PC-3 (cell line): ENCODE measurements at regions of chr11 and their contacts with region 1.

Region 1: DNA sequence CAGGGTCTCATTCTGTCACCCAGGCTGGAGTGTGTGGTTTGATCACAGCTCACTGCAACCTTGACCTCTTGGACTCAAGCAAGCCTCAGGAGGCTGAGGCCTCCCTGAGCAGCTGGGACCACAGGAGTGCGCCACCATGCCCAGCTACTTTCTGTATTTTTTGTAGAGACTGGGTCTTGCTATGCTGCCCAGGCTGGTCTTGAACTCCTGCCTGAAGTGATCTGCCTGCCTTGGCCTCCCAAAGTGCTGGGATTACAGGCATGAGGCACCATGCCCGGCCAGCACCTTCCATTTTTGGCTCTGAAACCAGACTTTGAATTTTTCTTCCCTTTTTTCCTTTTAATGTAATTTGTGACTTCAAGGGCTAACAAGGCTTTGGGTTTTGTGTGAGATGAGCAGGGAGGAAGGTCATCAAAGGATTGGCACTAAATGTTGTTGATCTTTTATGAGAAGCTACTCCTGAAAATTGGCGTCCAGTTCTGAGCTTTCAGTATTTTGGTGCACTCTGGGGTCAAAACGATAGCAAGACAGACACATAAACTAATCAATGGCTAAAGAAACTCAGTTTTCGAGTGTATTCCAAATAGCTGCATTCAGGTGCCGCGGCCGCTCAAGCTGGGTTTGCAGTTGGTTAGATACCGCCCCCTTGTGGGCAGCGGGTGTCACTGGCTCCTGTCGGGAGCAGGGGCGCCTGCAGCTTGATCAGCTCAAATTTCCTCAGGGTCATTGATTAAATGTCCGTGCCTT is 51.9 kb upstream of the CLMP start:
- DNase-seq: peak; percentile 92
- ATAC-seq: peak; percentile 91
- H3K4me3 ChIP-seq: no peak overlapping the region
- H3K27ac ChIP-seq: no peak overlapping the region
- H3K4me1 ChIP-seq: peaks cover 14% of the 10 kb centered on the region
- H3K27me3 ChIP-seq: no peaks in the 10 kb centered on the region
- CTCF ChIP-seq: peak; percentile 99

Region 2: DNA sequence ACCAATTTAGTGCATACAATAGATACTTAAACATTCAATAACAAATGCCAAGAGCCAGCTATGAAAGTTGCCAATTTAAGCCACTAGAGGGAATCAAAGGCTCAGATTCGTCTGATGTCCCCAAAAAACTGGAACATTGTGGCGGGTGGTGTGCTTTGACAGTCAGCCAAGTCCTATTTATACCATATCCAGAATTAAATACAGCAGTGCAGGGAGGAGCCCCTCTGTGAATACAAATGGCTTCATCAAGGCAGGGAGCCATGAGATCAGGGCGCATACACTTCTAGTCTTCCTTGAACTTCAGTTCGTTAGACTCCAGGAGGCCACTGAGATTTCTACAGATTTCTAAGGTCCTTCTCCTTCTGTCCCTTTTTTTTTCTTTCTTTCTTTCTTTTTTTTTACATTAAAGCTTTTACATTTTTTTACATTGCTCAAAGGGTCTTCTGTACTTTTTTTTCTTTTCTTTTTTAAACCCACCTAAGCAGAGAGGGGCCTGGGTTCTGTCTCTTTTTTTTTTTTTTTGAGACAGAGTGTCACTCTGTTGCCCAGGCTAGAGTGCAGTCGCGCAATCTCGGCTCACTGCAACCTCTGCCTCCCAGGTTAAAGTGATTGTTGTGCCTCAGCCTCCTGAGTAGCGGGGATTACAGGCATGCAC is 143.5 kb before region 1 on chr11:
- CTCF ChIA-PET with region 1: interaction called, 46 read pairs
- POLR2A ChIA-PET with region 1: no interaction called
- intact Hi-C with region 1: loop called (anchors 2 kb)
- DNase-seq: peak; percentile 87
- ATAC-seq: peak; percentile 75
- H3K4me3 ChIP-seq: no peak overlapping the region
- H3K27ac ChIP-seq: no peak overlapping the region
- H3K4me1 ChIP-seq: 0 out of 2 replicates have a peak, but pooled peaks cover 4% of the 10 kb centered on the region
- H3K27me3 ChIP-seq: no peaks in the 10 kb centered on the region
- CTCF ChIP-seq: peak; percentile 93

Region 3: GRCh38 chr11:123122341-123122740 is 124.6 kb before region 1 on chr11:
- CTCF ChIA-PET with region 1: interaction called, 11 read pairs
- POLR2A ChIA-PET with region 1: no interaction called
- intact Hi-C with region 1: no loop called
- DNase-seq: no peak
- ATAC-seq: no peak
- H3K4me3 ChIP-seq: no peak overlapping the region
- H3K27ac ChIP-seq: no peak overlapping the region
- H3K4me1 ChIP-seq: peaks cover 15% of the 10 kb centered on the region
- H3K27me3 ChIP-seq: no peaks in the 10 kb centered on the region
- CTCF ChIP-seq: no peak

Region 4: GRCh38 chr11:123195188-123196059 is 51.5 kb before region 1 on chr11 and contains the start of gene CLMP:
- CTCF ChIA-PET with region 1: interaction called, 4 read pairs
- POLR2A ChIA-PET with region 1: no interaction called
- intact Hi-C with region 1: loop called (anchors 2 kb)
- DNase-seq: peak; percentile 62
- ATAC-seq: peak; percentile 59
- H3K4me3 ChIP-seq: peak within 1 kb of the TSS; percentile 78
- H3K27ac ChIP-seq: peak within 1 kb of the TSS; percentile 23
- H3K4me1 ChIP-seq: peaks cover 44% of the 10 kb centered on the region
- H3K27me3 ChIP-seq: no peaks in the 10 kb centered on the region
- CTCF ChIP-seq: no peak
- total RNA-seq, gene CLMP: 30.4 and 33.0 TPM in 2 replicates